Activated CD4-positive, alpha-beta T cell treated with anti-CD3 and anti-CD28 coated beads for 36 hours (primary cell): ENCODE measurements at regions of chr10 and their contacts with region 1.

Region 1: GRCh38 chr10:12710594-12711349 is 290.7 kb downstream of the CCDC3 start:
- DNase-seq: peak; percentile 92
- ATAC-seq: peak; percentile 81
- H3K4me3 Mint-ChIP-seq: no peak overlapping the region
- H3K27ac Mint-ChIP-seq: peak overlapping the region; percentile 91
- H3K4me1 Mint-ChIP-seq: peaks cover 70% of the 10 kb centered on the region
- H3K27me3 Mint-ChIP-seq: no peaks in the 10 kb centered on the region

Region 2: DNA sequence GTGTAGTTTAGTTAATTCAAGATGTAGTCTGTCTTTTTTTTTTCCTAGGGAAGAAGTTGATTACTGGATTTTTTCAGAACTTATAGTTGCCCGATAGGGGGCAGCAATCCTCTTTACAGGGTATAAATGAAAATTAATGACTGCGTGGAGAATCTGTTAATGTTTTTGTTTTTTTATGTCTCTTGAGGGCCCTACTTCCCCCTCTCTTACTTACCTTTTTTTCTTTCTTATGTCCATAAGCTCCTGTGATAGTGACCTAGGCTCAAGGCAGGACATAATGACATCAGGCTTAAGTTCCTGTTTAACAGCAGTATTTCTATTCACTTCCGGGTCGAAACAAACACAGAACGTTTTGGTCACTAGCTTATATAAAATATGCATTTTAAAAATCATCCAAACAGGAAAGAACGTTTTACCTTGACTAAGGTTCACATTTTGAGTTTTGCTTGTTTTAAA is 496.0 kb before region 1 on chr10:
- CTCF ChIA-PET with region 1: interaction called, 5 read pairs
- POLR2A ChIA-PET with region 1: no interaction called
- intact Hi-C with region 1: loop called in 1 of 2 experiments (anchors 1 kb)
- DNase-seq: peak; percentile 62
- ATAC-seq: peak; percentile 44
- H3K4me3 Mint-ChIP-seq: no peak overlapping the region
- H3K27ac Mint-ChIP-seq: peak overlapping the region; percentile 77
- H3K4me1 Mint-ChIP-seq: peaks cover 17% of the 10 kb centered on the region
- H3K27me3 Mint-ChIP-seq: no peaks in the 10 kb centered on the region

Region 3: DNA sequence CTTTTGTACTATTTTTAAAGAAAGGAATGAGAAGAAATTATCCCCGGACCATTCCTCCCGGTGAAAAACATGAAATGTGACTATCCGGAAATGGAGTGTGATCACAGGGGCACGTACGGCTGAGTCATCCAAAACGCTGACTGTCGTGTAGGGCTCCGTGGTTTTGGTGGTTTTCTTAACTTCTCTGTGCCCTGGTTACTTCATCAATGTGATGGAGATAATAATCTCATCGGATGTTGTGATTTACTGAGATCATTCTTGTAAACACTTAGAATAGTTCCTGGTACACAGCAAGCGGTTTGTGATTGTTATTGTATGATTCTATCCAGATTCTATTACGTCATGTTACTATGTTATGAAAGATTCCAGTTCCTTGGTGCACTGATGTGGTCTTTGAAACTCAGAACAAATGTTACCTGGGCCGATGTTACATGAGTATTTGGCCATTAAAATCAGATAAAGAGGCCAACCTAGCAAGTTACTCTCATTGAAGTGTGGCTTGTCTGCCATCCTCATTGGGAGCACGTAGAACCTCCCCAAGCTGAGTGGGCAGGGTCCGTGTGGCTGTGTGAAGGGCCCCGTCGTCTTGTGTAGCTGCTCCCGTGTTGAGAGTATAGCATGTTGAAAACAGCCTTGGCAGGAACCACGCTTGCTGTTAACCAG is 261.9 kb before region 1 on chr10:
- CTCF ChIA-PET with region 1: interaction called, 5 read pairs
- POLR2A ChIA-PET with region 1: no interaction called
- intact Hi-C with region 1: loop called in 1 of 2 experiments (anchors 1 kb)
- DNase-seq: peak; percentile 86
- ATAC-seq: peak; percentile 94
- H3K4me3 Mint-ChIP-seq: peak overlapping the region; percentile 68
- H3K27ac Mint-ChIP-seq: peak overlapping the region; percentile 92
- H3K4me1 Mint-ChIP-seq: peaks cover 43% of the 10 kb centered on the region
- H3K27me3 Mint-ChIP-seq: no peaks in the 10 kb centered on the region

Region 4: DNA sequence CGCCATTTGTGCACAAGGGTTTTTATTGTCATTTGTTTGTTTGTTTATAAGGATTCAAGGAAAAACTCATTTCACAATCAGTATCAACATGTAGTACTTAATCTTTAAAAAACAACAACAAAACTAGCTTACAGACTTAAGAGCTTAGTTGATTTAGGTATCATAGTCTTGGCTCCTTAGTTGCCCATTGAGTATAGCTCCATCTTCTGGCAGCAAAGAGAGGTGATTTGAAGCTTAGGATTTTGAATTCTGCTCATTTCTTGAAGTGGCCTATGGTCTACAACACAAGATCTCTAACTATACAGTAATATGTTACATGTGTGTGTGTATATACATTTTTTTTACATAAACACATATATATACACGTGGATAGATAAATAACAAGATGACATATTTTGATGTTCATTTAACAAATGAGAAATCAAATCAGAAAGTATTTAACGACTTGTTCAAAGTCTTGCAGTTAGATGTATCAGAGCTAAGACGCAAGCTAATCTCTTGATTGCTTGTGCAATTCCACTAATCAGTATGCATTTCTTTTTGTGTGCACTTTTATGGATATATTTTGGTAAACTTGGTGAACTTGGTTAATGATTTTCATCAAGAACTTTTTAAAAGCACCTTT is 54.1 kb before region 1 on chr10:
- CTCF ChIA-PET with region 1: interaction called, 9 read pairs
- POLR2A ChIA-PET with region 1: no interaction called
- intact Hi-C with region 1: loop called in 1 of 2 experiments (anchors 1 kb)
- DNase-seq: no peak
- ATAC-seq: peak; percentile 75
- H3K4me3 Mint-ChIP-seq: no peak overlapping the region
- H3K27ac Mint-ChIP-seq: no peak overlapping the region
- H3K4me1 Mint-ChIP-seq: peaks cover 27% of the 10 kb centered on the region
- H3K27me3 Mint-ChIP-seq: no peaks in the 10 kb centered on the region

Region 5: DNA sequence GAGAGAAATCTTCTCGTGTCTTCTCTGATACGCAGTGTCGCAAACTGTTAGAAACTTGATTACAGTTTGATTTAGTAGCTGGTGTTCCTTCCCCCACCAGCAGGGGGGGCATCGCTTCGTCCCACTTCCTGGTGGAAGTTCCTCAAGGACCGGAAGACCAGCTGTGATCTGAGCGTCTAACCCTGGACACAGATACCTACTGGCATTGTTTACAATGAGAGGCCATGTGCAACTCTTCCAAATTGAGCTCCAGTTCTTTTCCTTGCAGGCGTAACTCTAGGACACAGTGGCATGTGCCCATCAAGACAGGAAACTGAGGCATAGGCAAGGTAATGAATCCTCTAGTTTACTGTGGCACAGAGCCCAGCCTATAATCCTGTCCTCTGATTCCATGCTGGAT is 71.8 kb after region 1 on chr10:
- CTCF ChIA-PET with region 1: interaction called, 20 read pairs
- POLR2A ChIA-PET with region 1: interaction called, 6 read pairs
- intact Hi-C with region 1: no loop called
- DNase-seq: peak; percentile 65
- ATAC-seq: no peak
- H3K4me3 Mint-ChIP-seq: no peak overlapping the region
- H3K27ac Mint-ChIP-seq: peak overlapping the region; percentile 48
- H3K4me1 Mint-ChIP-seq: peaks cover 38% of the 10 kb centered on the region
- H3K27me3 Mint-ChIP-seq: no peaks in the 10 kb centered on the region

Region 6: DNA sequence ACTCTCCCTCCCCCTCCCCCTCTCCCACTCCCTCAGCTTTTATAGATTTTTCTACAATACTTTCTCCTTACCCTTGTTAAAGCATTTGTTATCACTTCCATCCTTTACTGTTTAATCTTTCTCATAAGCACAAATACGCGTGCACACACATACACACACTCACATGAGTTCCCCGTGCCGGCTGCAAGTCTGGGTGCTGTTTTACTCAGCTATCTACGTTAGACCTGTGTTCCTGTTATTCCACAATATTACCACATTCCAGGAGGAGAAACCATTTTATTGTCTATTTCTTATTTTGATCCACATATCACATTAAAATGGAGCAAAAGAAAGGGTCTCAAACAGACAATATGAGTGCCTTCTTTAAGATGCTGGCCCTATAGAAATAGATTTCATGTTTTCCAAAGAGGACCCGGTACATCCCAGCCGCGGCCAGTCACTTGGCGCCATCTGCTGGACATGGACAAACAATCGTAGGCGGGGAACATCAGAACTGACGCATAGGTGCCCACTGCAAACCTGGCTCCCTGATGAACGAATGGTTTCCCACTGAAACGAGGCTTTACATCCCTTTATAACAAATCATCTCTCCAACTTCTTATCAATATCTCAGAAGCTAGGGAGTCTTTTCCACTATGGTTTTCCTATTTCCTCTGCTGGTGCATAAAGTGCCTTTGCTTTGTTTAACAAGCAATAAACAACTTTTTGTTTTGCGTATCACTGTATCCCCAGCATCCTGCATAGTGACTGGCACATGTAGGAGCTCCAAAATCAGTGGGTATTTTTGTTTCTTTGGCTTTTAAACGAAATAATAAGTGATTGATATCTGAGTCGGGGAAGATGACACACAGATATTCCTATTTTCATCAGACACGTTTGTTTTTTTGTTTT is 364.0 kb after region 1 on chr10:
- CTCF ChIA-PET with region 1: no interaction called
- POLR2A ChIA-PET with region 1: no interaction called
- intact Hi-C with region 1: loop called (anchors 2 to 10 kb)
- DNase-seq: peak; percentile 84
- ATAC-seq: peak; percentile 80
- H3K4me3 Mint-ChIP-seq: no peak overlapping the region
- H3K27ac Mint-ChIP-seq: no peak overlapping the region
- H3K4me1 Mint-ChIP-seq: no peaks in the 10 kb centered on the region
- H3K27me3 Mint-ChIP-seq: peaks cover 19% of the 10 kb centered on the region